Ascending aorta (tissue), 2 donors: ENCODE measurements at regions of chr17 and their contacts with region 1.

Region 1: GRCh38 chr17:82212331-82213250 is at the start of gene CCDC57:
- DNase-seq: peak in 1 of 2 donors; percentile 89
- H3K4me3 ChIP-seq: peak within 1 kb of the TSS; percentile 55 to 99
- H3K27ac ChIP-seq: peak within 1 kb of the TSS; percentile 55 to 89
- H3K4me1 ChIP-seq: peaks cover 20 to 30% of the 10 kb centered on the region in 2 donors
- H3K27me3 ChIP-seq: no peaks in the 10 kb centered on the region
- CTCF ChIP-seq: peak in 1 of 3 experiments; percentile 10
- total RNA-seq, gene CCDC57: 12.8 TPM

Region 2: DNA sequence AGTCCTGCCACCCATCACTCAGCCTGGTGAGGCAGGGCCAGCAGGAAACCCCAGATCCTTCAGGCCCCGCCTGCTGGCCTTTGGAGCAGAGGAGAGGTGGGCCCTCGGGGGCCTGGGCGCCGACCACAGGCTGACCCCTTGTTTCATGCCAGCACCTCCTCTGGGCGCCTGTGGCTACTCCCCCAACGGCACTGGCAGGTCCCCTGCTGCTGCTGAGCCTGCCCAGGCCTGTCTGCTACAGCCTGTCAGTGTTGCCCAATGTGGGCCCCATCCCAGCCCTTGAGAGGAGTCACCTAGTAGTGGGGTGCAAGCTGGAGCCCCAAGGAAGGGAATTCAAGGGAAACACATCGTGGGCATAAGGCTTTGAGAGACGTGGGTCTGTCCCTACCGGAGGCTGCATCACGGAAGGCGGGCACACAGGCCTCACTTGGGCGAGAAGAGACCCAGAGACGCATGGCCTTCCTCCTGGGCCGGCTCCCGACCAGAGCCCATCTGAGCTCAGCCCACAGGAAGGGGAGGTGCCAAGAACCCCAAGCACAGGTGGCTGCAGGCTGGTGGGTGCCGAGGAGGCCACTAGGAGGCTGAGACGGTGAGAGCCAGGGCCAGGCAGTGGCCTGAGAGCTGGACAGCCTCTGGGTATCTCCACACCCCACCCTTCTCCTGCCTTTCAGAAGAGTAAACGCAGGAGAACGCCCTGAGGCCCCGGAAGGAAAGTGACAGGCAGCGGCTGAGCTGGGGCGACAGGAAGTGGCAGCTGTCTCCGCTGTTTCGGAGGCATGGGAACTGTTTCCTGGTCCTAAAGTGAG is 106.5 kb before region 1 on chr17:
- intact Hi-C with region 1: no loop called
- DNase-seq: no peak
- H3K4me3 ChIP-seq: peak overlapping the region in 1 of 2 donors; percentile 20
- H3K27ac ChIP-seq: peak overlapping the region; percentile 71 to 74
- H3K4me1 ChIP-seq: peaks cover 13 to 16% of the 10 kb centered on the region in 2 donors
- H3K27me3 ChIP-seq: no peaks in the 10 kb centered on the region
- CTCF ChIP-seq: peak in 1 of 3 experiments; percentile 8

Region 3: GRCh38 chr17:82230627-82231311 is 18.2 kb after region 1 on chr17:
- intact Hi-C with region 1: loop called (anchors 2 kb)
- DNase-seq: peak in 1 of 2 donors; percentile 92
- H3K4me3 ChIP-seq: peak overlapping the region; percentile 55 to 70
- H3K27ac ChIP-seq: peak overlapping the region; percentile 79 to 85
- H3K4me1 ChIP-seq: peaks cover 10 to 20% of the 10 kb centered on the region in 2 donors
- H3K27me3 ChIP-seq: no peaks in the 10 kb centered on the region
- CTCF ChIP-seq: peak; percentile 38 to 84 (median 60)